A673 (cell line): ENCODE measurements at regions of chr7 and their contacts with region 1.

Region 1: DNA sequence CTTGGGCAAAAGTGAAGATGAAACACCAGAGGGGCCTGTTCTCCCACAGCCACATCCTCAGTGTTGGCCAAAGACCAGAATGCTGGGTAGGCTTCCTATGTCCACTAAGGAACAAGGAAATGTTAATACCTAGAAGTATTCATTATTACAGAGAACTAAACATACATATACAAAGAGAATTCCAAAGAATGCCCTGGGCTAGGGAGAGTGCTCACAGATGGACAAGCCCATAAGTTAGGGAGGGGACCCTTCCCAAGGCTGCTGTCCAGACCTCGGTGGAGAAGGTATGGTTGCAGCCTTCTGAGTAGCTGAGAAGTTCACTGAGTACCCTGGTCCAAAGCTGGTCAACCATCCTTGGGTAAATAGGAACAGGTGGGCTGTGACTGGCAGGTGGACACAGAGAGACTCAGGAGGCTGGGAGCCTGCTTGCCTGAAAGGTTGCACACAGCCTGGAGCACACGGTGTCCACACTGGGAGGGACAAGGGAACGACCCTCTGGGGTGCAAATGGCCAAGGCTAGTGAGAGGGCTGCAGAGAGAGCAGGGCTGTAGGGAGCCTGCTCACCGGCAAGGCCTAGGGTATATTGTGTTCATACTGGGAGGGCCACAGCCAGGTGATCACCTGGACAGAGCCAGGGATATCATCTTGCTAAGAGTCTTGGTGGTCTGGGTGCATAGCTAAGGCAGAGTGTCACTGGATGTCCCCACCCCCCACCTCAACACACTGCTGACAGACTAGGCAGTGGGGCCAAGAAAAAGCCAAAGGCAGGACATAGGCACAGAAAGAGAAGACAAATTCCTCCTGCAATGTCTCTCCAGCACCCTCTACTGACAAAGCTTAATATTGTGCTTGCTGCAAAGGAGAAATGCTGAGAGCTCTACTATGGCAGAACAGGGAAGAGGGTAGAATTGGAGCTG is 40.3 kb downstream of the CPVL start:
- DNase-seq: peak; percentile 82
- H3K4me3 ChIP-seq: no peak overlapping the region
- H3K27ac ChIP-seq: no peak overlapping the region
- H3K4me1 ChIP-seq: no peaks in the 10 kb centered on the region
- H3K27me3 ChIP-seq: no peaks in the 10 kb centered on the region
- CTCF ChIP-seq: peak; percentile 87

Region 2: GRCh38 chr7:28955718-28956619 is 150.0 kb before region 1 on chr7:
- CTCF ChIA-PET with region 1: interaction called, 23 read pairs
- POLR2A ChIA-PET with region 1: no interaction called
- intact Hi-C with region 1: loop called (anchors 1 kb)
- DNase-seq: peak; percentile 78
- H3K4me3 ChIP-seq: peak overlapping the region; percentile 71
- H3K27ac ChIP-seq: no peak overlapping the region
- H3K4me1 ChIP-seq: peaks cover 50% of the 10 kb centered on the region
- H3K27me3 ChIP-seq: peaks cover 5% of the 10 kb centered on the region
- CTCF ChIP-seq: peak; percentile 71

Region 3: DNA sequence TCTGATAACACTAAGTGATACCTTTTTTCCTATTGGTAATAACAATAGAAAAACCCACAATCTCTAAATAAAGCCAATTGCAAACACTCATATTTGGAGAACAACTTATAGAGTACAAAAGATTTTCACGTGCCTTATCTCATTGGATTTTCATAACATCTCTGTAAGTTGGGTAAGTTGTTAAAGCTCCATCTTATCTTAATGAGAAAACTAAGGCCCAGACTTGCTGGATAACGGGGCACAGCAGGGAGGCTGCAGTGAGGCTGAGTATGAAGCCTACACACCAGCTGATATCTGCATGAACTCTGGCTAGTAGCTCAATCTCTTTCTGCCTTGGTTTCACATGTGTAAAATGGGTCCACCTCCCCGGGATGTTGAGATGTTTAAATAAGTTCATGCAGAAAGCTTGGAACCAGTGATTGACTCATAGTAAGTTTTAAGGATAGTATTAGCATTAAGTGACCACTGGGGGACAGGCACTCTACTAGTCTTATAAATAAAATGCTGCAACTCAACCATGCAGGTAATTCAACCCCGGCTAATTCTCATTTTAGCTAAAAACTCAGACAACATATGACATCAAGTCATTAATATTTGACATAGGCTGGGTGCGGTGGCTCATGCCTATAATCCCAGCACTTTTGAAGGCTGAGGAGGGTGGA is 13.7 kb after region 1 on chr7:
- CTCF ChIA-PET with region 1: interaction called, 8 read pairs
- POLR2A ChIA-PET with region 1: interaction called, 10 read pairs
- intact Hi-C with region 1: no loop called
- DNase-seq: no peak
- H3K4me3 ChIP-seq: no peak overlapping the region
- H3K27ac ChIP-seq: no peak overlapping the region
- H3K4me1 ChIP-seq: peaks cover 72% of the 10 kb centered on the region
- H3K27me3 ChIP-seq: no peaks in the 10 kb centered on the region
- CTCF ChIP-seq: peak; percentile 16; the same call in 1 of the 2 replicates

Region 4: DNA sequence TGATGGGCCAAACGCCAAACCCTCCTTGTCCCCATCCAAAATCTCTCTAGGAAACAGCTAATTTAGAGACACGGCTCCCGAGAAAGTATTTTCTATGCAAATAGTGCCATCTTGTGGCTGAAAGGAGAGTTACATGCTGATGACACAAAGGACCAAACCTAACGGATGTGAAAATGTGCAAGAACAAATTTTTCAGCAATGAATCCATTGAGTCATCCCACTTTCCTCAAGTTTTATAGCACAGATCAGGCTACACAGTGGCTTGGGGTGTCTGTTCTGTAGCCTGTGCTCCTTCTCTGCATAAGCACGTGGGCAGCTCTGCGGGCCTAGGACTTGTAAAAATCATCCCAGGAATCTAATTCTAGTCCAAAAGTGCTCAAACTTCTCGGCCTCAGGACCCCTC is 302.8 kb after region 1 on chr7:
- CTCF ChIA-PET with region 1: interaction called, 11 read pairs
- POLR2A ChIA-PET with region 1: no interaction called
- intact Hi-C with region 1: loop called (anchors 2 kb)
- DNase-seq: peak; percentile 95
- H3K4me3 ChIP-seq: no peak overlapping the region
- H3K27ac ChIP-seq: peak overlapping the region; percentile 60
- H3K4me1 ChIP-seq: peaks cover 35% of the 10 kb centered on the region
- H3K27me3 ChIP-seq: no peaks in the 10 kb centered on the region
- CTCF ChIP-seq: peak; percentile 84